BJ (cell line): ENCODE measurements at regions of chr18 and their contacts with region 1.

Region 1: DNA sequence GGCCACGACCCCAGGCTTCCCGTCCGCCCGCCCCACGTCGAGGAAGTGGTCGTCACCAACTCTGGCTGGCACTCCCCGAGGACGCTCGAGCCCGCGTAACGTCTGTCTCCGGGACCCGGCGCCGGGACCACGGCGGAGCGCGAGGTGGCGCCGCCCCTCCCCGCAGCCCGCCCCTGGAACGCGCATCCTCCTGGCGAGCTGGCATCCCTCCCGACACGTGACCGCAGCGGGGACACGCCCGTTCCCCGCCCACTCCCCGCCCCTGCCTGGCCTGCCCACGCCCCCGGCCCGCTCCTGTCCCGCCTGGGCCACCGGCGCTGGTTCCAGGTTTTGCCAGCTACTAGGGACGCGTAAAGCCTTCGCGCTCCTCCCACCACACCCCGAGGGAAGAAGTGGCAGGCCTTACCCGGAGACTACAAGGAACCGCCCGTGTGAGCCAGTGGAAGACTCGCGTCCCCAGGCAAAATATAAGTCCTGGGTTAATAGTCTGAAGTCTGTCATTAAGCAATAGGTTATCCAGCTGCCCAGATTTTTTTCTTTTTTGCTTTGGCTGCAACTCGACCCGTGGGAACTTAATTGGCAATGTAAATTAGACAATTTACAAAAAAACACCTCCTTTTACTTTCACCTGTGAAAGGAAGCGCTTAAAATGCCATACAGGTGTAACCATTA is at the start of gene OSBPL1A:
- DNase-seq: peak; percentile 45
- H3K4me3 ChIP-seq: peak within 1 kb of the TSS; percentile 72
- H3K27me3 ChIP-seq: no peaks in the 10 kb centered on the region
- CTCF ChIP-seq: no peak
- polyA plus RNA-seq, gene OSBPL1A: 20.1 and 30.9 TPM in 2 replicates

Region 2: GRCh38 chr18:24189007-24189528 is 208.8 kb before region 1 on chr18:
- CTCF ChIA-PET with region 1: no interaction called
- POLR2A ChIA-PET with region 1: no interaction called
- DNase-seq: no peak
- H3K4me3 ChIP-seq: no peak overlapping the region
- H3K27me3 ChIP-seq: no peaks in the 10 kb centered on the region
- CTCF ChIP-seq: no peak

Region 3: DNA sequence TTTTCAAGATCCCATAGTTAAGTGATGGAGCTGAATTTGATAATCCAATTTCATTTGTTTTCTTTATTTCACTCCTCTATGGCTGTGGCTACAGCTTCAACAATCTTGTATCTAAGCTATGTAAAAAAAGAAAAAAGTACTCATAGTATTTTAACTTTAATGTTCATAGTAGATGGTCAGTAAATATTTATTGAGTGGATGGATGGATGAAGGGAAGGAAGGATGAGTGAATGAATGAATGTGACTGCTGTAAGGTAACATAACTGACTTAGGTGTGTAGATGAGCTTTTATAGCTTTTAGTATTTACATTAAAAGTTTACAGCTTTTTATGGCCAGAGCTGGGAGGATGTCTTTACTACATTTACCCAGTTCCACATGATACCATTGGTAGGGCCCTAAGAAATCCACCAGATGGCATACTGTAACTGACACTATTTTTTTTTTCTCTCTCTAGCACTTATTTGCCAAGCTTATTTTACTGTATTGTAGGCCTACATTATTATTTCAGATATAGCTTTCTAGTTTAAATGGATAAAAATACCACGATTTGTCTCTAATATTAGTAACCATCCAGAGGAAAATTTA is 49.2 kb after region 1 on chr18:
- CTCF ChIA-PET with region 1: no interaction called
- POLR2A ChIA-PET with region 1: interaction called, 12 read pairs
- DNase-seq: no peak
- H3K4me3 ChIP-seq: no peak overlapping the region
- H3K27me3 ChIP-seq: no peaks in the 10 kb centered on the region
- CTCF ChIP-seq: peak; percentile 15; the same call in 1 of the 2 replicates

Region 4: DNA sequence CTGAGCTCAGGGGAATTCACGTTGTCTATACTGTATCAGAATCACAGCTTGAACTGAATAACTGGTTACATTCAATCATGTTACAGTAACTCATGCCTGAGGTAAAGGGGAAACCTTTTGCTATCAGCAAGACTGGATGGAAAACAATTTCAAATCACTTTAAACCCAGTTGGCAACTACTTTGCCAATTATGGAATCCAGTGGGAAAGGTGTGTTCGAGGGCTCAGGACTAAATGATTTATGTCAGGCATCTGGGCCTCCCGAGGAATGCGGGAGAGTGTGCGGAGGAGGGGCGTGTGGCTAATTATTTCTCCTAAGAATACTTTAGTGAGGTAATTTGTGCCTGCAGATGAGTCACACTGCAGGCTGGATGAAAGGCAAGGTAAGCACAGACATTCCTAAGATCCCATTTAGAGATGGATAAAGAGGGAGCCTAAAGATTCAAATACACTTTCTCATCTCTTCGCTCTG is 162.7 kb after region 1 on chr18:
- CTCF ChIA-PET with region 1: no interaction called
- POLR2A ChIA-PET with region 1: no interaction called
- DNase-seq: no peak
- H3K4me3 ChIP-seq: no peak overlapping the region
- H3K27me3 ChIP-seq: peaks cover 6% of the 10 kb centered on the region; the same call in 1 of the 2 replicates
- CTCF ChIP-seq: no peak